ENCODE measurements at regions of chr1 and their contacts with region 1.

Region 1: DNA sequence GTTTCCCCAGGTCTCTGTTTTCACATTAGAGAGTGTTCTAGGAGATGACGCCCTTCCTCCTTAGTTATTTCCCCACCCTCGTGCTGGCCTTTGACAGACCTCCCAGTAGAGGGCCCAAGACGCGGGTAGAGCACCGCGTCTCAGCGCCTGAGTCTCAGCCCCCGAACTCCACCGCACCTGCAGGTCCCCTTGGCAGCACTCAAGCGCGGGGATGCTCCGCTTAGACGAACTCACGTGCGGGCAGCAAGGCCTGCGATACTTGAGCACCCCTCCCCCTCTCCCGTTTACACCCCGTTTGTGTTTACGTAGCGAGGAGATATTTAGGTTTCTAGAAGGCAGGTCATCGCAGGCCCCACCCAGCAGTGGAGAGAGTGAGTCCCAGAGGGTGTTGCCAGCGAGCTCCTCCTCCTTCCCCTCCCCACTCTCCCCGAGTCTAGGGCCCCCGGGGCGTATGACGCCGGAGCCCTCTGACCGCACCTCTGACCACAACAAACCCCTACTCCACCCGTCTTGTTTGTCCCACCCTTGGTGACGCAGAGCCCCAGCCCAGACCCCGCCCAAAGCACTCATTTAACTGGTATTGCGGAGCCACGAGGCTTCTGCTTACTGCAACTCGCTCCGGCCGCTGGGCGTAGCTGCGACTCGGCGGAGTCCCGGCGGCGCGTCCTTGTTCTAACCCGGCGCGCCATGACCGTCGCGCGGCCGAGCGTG is at the start of gene CD55:
- DNase-seq: peak; percentile 97
- ATAC-seq: peak; percentile 92
- H3K4me3 Mint-ChIP-seq: peak within 1 kb of the TSS; percentile 99
- H3K27ac Mint-ChIP-seq: peak within 1 kb of the TSS; percentile 99
- H3K4me1 Mint-ChIP-seq: peaks cover 24% of the 10 kb centered on the region
- H3K27me3 Mint-ChIP-seq: no peaks in the 10 kb centered on the region
- total RNA-seq, gene CD55: 69.3 to 80.6 TPM

Region 2: DNA sequence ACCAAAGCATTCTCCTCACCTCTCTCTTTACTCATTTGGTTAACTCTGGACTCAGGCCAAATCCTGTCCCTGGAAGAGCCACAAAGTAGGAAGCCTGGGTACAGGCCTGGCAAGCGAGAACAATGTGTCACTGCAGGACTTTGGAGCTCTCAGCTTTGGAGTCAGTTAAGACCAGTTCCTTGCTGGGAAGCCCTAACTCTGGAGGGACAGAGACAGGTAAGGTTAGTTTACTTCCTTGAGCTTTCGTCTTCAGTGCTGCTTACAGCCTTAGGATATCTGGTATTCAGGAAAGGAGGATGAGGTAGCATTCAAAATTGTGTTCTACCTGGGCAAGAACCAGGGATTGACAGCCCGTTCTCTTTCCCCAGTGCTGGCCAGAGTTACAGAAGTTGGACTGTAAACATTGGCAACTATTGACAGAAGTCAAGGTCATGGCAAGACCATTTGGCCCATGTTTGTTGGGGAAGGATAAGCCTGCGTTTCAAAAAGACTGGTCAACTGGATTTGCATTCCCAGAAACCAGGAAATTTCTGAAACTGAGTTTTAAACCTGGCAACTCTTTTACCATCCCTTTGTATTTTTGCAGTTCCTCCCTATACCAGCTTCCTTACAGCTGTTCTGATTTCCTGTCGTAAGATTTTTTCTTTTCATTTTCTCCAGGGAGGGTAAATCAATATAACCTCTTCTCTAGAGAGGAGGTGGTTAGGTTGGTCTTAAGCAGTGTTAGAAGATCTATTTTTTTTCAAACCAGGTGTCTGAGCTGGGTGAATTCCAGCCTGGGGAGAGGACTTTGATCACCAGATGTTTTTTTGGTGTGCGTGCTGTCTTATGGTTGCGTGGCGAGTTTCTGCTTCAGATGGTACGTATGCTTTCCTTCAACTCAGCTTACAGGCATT is 232.3 kb before region 1 on chr1 and contains the start of gene C4BPB:
- POLR2A ChIA-PET with region 1: interaction called, 10 read pairs
- DNase-seq: no peak
- ATAC-seq: peak; percentile 53
- H3K4me3 Mint-ChIP-seq: peak within 1 kb of the TSS; percentile 80
- H3K27ac Mint-ChIP-seq: peak within 1 kb of the TSS; percentile 84
- H3K4me1 Mint-ChIP-seq: peaks cover 26% of the 10 kb centered on the region
- H3K27me3 Mint-ChIP-seq: peaks cover 2% of the 10 kb centered on the region
- total RNA-seq, gene C4BPB: 1.0 to 2.7 TPM

Region 3: GRCh38 chr1:207309775-207310273 is 11.4 kb before region 1 on chr1:
- POLR2A ChIA-PET with region 1: interaction called, 12 read pairs
- DNase-seq: no peak
- ATAC-seq: no peak
- H3K4me3 Mint-ChIP-seq: peak overlapping the region; percentile 55
- H3K27ac Mint-ChIP-seq: peak overlapping the region; percentile 27
- H3K4me1 Mint-ChIP-seq: peaks cover 14% of the 10 kb centered on the region
- H3K27me3 Mint-ChIP-seq: no peaks in the 10 kb centered on the region

Region 4: DNA sequence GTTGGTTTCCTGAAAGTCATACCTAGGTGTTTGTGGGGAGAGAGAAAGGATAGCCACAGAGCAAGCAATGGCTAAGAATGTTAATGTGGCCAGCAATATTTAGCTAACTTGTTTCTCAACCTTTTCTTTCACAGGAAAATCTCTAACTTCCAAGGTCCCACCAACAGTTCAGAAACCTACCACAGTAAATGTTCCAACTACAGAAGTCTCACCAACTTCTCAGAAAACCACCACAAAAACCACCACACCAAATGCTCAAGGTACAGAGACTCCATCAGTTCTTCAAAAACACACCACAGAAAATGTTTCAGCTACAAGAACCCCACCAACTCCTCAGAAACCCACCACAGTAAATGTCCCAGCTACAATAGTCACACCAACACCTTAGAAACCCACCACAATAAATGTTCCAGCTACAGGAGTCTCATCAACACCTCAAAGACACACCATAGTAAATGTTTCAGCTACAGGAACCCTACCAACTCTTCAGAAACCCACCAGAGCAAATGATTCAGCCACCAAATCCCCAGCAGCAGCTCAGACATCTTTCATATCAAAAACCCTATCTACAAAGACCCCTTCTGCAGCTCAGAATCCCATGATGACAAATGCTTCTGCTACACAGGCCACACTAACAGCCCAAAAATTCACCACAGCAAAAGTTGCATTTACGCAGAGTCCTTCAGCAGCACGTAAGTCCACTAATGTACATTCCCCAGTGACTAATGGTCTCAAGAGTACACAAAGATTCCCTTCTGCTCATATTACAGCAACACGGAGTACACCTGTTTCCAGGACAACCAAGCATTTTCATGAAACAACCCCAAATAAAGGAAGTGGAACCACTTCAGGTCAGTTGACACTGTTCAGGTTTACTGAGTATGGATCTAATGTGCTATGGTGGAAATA is 15.6 kb after region 1 on chr1:
- POLR2A ChIA-PET with region 1: interaction called, 145 read pairs
- DNase-seq: peak; percentile 40
- ATAC-seq: peak; percentile 79
- H3K4me3 Mint-ChIP-seq: peak overlapping the region; percentile 43
- H3K27ac Mint-ChIP-seq: peak overlapping the region; percentile 93
- H3K4me1 Mint-ChIP-seq: peaks cover 52% of the 10 kb centered on the region
- H3K27me3 Mint-ChIP-seq: no peaks in the 10 kb centered on the region

Region 5: DNA sequence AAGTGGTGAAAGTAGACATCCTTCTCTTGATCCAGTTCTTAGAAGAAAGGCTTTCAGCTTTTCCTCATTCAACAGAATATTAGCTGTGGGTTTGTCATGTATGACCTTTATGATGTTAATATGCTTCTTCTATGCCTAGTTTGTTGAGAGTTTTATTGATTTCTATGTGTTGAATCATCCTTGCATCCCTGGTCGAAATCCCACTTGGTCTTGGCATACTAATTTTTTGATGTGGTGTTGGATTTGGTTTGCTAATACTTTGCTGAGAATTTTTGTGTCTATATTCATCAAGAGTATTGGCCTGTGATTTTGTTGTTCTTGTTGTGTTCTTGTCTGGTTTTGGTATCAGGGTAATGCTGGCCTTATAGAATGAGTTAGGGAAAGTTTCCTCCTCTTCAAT is 21.1 kb after region 1 on chr1:
- POLR2A ChIA-PET with region 1: interaction called, 145 read pairs
- DNase-seq: no peak
- ATAC-seq: no peak
- H3K4me3 Mint-ChIP-seq: peak overlapping the region; percentile 58
- H3K27ac Mint-ChIP-seq: peak overlapping the region; percentile 60
- H3K4me1 Mint-ChIP-seq: peaks cover 65% of the 10 kb centered on the region
- H3K27me3 Mint-ChIP-seq: no peaks in the 10 kb centered on the region

Region 6: DNA sequence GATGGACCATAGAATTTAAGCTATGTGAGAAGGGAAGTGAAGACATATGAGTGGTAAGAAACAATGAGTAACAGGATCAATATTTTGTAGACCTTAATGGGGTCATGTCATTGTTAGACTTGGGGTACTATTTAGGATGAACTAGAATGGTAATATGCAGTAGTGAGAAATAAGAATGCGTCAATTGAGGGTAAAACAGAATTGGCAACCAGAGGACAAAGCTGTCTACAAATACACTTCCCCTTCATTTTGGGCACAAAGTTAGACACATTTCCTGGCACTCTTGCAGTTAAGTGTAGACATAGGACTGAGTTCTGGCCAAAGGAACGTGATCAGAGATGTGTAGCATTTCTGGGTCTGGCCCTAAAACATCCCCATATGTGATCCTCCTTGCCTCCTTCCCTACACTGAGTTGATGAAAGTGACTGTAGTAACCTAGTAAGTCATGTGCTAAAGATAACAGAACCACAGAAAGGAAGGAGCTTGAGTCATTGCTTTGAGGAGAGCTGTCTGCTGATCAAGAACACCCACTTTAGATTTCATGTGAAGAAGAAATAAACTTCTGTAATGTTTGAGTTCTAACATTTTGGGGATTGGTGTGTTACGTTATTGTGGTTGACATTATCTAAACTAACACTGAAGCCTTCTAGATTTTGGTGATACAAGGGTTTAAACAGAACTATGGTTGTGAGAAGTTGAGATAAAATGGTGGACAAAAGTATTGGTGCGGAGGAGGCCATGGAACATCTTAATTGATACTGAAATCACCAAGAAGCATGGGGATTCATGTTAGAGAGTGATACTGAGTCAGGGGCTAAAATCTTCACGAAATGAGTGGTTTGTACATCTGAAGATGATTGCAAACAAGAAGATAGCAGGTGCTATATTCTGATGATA is 42.0 kb after region 1 on chr1:
- POLR2A ChIA-PET with region 1: interaction called, 15 read pairs
- DNase-seq: no peak
- ATAC-seq: peak; percentile 96
- H3K4me3 Mint-ChIP-seq: no peak overlapping the region
- H3K27ac Mint-ChIP-seq: no peak overlapping the region
- H3K4me1 Mint-ChIP-seq: no peaks in the 10 kb centered on the region
- H3K27me3 Mint-ChIP-seq: no peaks in the 10 kb centered on the region

Region 7: DNA sequence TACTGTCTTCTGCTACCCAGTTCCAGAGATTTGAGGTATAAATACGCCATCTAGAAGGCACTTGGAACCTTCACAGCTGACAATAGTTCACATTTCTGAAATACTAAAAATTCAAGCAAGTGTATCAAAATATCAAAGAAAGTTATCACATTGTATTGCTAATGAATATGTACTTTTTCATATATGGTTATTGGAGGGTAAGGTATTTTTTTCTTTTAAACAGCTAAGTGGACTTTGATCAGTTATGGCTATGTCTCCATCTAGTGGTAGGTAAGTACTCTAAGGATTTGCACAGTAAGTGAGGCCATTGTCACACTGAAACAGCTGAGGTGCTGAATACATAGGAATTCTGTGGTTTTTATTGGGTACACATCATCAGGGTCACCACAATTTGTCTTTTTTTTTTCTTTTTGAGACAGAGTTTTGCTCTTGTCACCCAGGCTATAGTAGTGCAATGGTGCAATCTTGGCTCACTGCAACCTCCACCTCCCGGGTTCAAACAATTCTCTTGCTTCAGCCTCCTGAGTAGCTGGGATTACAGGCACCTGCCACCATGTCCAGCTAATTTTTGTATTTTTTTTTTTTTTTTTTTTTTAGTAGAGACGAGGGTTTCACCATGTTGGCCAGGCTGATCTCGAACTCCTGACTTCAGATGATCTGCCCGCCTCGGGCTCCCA is 83.8 kb after region 1 on chr1:
- POLR2A ChIA-PET with region 1: interaction called, 12 read pairs
- DNase-seq: no peak
- ATAC-seq: peak; percentile 80
- H3K4me3 Mint-ChIP-seq: no peak overlapping the region
- H3K27ac Mint-ChIP-seq: no peak overlapping the region
- H3K4me1 Mint-ChIP-seq: peaks cover 4% of the 10 kb centered on the region
- H3K27me3 Mint-ChIP-seq: peaks cover 3% of the 10 kb centered on the region